Activated naive CD4-positive, alpha-beta T cell treated with anti-CD3 and anti-CD28 coated beads for 36 hours (primary cell): ENCODE measurements at regions of chr1 and their contacts with region 1.

Region 1: GRCh38 chr1:53485478-53486394 is 26.5 kb downstream of the DMRTB1 start:
- DNase-seq: peak; percentile 83
- H3K4me3 Mint-ChIP-seq: no peak overlapping the region
- H3K27ac Mint-ChIP-seq: no peak overlapping the region
- H3K4me1 Mint-ChIP-seq: no peaks in the 10 kb centered on the region
- H3K27me3 Mint-ChIP-seq: peaks cover 9% of the 10 kb centered on the region

Region 2: DNA sequence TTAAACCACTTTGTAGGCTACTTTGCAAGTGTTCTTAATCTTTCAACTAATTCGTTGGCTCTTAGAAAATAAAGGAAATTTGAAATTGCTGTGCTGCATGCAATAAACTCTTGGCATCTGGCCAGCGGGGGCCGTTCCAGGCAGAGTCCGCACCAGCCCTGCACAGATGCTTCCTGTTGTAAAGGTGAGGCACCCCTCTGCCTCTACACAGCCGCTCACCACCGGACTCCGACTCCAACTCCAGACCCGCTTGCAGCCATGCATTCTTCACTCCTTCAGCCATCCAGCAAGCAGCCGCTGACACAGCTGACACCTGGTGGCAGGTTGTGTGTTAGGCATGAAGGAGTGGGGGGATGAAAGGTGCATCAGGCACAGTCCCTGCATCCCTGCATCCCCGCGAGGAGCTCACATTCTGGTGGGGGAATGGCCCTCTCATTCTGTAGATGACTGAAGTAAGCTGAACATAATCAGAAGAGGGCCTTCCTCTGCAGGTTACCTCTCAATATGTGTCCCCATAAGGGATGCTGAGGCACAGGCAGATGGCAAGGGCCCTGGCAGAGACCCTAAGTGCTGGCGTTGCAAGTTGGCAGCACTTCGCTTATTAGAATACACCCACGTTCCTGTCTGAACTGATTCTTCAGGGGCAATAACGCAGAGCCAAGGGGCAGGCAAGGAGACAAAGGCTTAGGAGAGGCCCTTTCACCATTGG is 196.4 kb after region 1 on chr1:
- CTCF ChIA-PET with region 1: interaction called, 5 read pairs
- intact Hi-C with region 1: loop called (anchors 1 kb)
- DNase-seq: peak; percentile 67
- H3K4me3 Mint-ChIP-seq: no peak overlapping the region
- H3K27ac Mint-ChIP-seq: no peak overlapping the region
- H3K4me1 Mint-ChIP-seq: peaks cover 6% of the 10 kb centered on the region
- H3K27me3 Mint-ChIP-seq: no peaks in the 10 kb centered on the region

Region 3: GRCh38 chr1:53754484-53755312 is 269.0 kb after region 1 on chr1:
- CTCF ChIA-PET with region 1: interaction called, 4 read pairs
- intact Hi-C with region 1: loop called (anchors 1 kb)
- DNase-seq: peak; percentile 51
- H3K4me3 Mint-ChIP-seq: no peak overlapping the region
- H3K27ac Mint-ChIP-seq: no peak overlapping the region
- H3K4me1 Mint-ChIP-seq: no peaks in the 10 kb centered on the region
- H3K27me3 Mint-ChIP-seq: no peaks in the 10 kb centered on the region